ENCODE measurements at regions of chr20 and their contacts with region 1.

Region 1: GRCh38 chr20:32535953-32536823 is 48.9 kb downstream of the NOL4L start:
- DNase-seq: peak; percentile 85
- H3K4me3 ChIP-seq: peak overlapping the region; percentile 35 to 56 (median 45)
- H3K27ac ChIP-seq: peak overlapping the region; percentile 55 to 73 (median 68)
- H3K4me1 ChIP-seq: peaks cover 15 to 39% (median 29%) of the 10 kb centered on the region in 4 donors
- H3K27me3 ChIP-seq: no peaks in the 10 kb centered on the region
- CTCF ChIP-seq: no peak
- EP300 ChIP-seq: no peak
- POLR2A ChIP-seq: peak; percentile 15

Region 2: GRCh38 chr20:32062776-32063170 is 473.4 kb before region 1 on chr20:
- in situ Hi-C with region 1: no loop called
- intact Hi-C with region 1: loop called (anchors 5 kb)
- DNase-seq: peak; percentile 34
- H3K4me3 ChIP-seq: no peak overlapping the region
- H3K27ac ChIP-seq: peak overlapping the region in 2 of 4 donors; percentile 5 to 52
- H3K4me1 ChIP-seq: no peaks in the 10 kb centered on the region
- H3K27me3 ChIP-seq: peaks cover 14% of the 10 kb centered on the region
- CTCF ChIP-seq: no peak
- EP300 ChIP-seq: no peak
- POLR2A ChIP-seq: no peak

Measured in transverse colon (tissue), 4 donors.